ENCODE measurements at regions of chr11 and their contacts with region 1.

Region 1: GRCh38 chr11:65988791-65989592 is 13.0 kb downstream of the EIF1AD start:
- DNase-seq: peak; percentile 95
- ATAC-seq: peak; percentile 98
- H3K4me3 ChIP-seq: no peak overlapping the region
- H3K27ac ChIP-seq: no peak overlapping the region
- H3K4me1 ChIP-seq: no peaks in the 10 kb centered on the region
- H3K27me3 ChIP-seq: no peaks in the 10 kb centered on the region
- CTCF ChIP-seq: peak; percentile 99

Region 2: DNA sequence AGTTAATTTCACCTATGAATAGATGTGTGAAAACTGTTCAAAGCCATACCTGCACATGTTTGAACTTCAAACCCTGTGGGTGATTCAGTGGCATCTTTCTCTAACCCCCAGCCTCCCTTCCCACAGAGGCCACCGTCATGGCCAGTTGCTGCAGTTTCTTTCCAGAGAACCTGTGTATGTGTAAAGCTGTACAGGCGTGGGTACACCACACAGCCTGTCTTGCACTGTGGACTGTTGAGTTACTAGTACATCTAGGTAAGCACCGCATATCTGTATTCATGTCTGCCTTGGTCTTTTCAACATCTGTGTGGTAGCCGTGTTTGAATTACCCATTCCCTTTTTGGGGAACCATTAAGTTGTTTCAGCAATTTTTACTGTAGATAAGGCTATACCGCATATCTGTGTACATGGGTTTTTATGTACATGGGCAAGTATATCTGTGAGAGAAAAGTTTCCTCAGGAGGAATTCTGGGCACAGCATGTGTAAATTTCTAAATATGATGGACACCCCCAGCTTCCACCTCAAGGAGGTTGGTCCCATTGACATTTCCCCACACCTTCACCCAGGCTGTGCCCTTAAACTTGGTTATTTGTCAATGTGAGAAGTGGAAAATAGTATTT is 552.5 kb before region 1 on chr11:
- CTCF ChIA-PET with region 1: no interaction called
- POLR2A ChIA-PET with region 1: interaction called, 15 read pairs
- in situ Hi-C with region 1: no loop called
- intact Hi-C with region 1: no loop called
- DNase-seq: no peak
- ATAC-seq: peak; percentile 26
- H3K4me3 ChIP-seq: peak overlapping the region in 1 of 2 experiments; percentile 15; a peak in 2 of 4 replicates
- H3K27ac ChIP-seq: peak overlapping the region; percentile 78
- H3K4me1 ChIP-seq: peaks cover 98% of the 10 kb centered on the region
- H3K27me3 ChIP-seq: no peaks in the 10 kb centered on the region
- CTCF ChIP-seq: no peak

Region 3: GRCh38 chr11:65894034-65894591 is 94.9 kb before region 1 on chr11:
- CTCF ChIA-PET with region 1: no interaction called
- POLR2A ChIA-PET with region 1: interaction called, 12 read pairs
- in situ Hi-C with region 1: no loop called
- intact Hi-C with region 1: loop called (anchors 2 kb)
- DNase-seq: no peak
- ATAC-seq: no peak
- H3K4me3 ChIP-seq: peak overlapping the region in 1 of 2 experiments; percentile 17; a peak in 2 of 4 replicates
- H3K27ac ChIP-seq: peak overlapping the region; percentile 87
- H3K4me1 ChIP-seq: peaks cover 63% of the 10 kb centered on the region
- H3K27me3 ChIP-seq: no peaks in the 10 kb centered on the region
- CTCF ChIP-seq: no peak; the same call in 1 of the 2 replicates

Region 4: DNA sequence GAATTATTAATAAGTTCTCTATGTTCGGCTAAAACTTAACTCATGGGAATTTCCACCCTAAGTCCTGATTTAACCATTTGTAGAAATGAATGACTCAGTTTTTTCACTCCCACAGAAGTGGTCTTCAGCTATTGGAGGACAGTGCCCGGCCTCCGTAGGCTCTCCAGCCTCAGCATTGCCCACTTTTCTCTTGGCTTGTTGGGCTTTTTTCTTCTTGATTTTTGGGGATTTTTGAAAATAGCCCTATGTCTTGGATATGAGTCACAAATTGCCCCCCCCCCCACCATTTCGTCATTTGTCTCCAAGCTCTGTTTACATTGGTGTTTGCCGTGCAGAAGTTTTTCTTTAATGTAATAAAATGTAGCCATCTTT is 147.7 kb after region 1 on chr11:
- CTCF ChIA-PET with region 1: no interaction called
- POLR2A ChIA-PET with region 1: interaction called, 10 read pairs
- in situ Hi-C with region 1: no loop called
- intact Hi-C with region 1: no loop called
- DNase-seq: no peak
- ATAC-seq: no peak
- H3K4me3 ChIP-seq: no peak overlapping the region
- H3K27ac ChIP-seq: no peak overlapping the region
- H3K4me1 ChIP-seq: peaks cover 10% of the 10 kb centered on the region; the same call in 1 of the 2 replicates
- H3K27me3 ChIP-seq: no peaks in the 10 kb centered on the region
- CTCF ChIP-seq: no peak

Measured in Panc1 (cell line).